Endothelial cell of umbilical vein (primary cell): ENCODE measurements at regions of chr21 and their contacts with region 1.

Region 1: GRCh38 chr21:21373969-21374368 is 375.8 kb downstream of the NCAM2 start:
- DNase-seq: no peak
- H3K4me3 ChIP-seq: no peak overlapping the region
- H3K27ac ChIP-seq: no peak overlapping the region
- H3K4me1 ChIP-seq: no peaks in the 10 kb centered on the region
- H3K27me3 ChIP-seq: no peaks in the 10 kb centered on the region
- CTCF ChIP-seq: no peak
- POLR2A ChIP-seq: no peak

Region 2: GRCh38 chr21:21163904-21164303 is 210.1 kb before region 1 on chr21:
- CTCF ChIA-PET with region 1: interaction called, 4 read pairs
- POLR2A ChIA-PET with region 1: no interaction called
- dilution Hi-C with region 1: no loop called
- intact Hi-C with region 1: loop called (anchors 1 kb)
- DNase-seq: peak; percentile 52
- H3K4me3 ChIP-seq: no peak overlapping the region
- H3K27ac ChIP-seq: no peak overlapping the region
- H3K4me1 ChIP-seq: no peaks in the 10 kb centered on the region
- H3K27me3 ChIP-seq: no peaks in the 10 kb centered on the region
- CTCF ChIP-seq: peak; percentile 44
- POLR2A ChIP-seq: no peak